Activated B cell treated with CpG ODN at 0.5 μM for 24 hours (primary cell): ENCODE measurements at regions of chr6 and their contacts with region 1.

Region 1: DNA sequence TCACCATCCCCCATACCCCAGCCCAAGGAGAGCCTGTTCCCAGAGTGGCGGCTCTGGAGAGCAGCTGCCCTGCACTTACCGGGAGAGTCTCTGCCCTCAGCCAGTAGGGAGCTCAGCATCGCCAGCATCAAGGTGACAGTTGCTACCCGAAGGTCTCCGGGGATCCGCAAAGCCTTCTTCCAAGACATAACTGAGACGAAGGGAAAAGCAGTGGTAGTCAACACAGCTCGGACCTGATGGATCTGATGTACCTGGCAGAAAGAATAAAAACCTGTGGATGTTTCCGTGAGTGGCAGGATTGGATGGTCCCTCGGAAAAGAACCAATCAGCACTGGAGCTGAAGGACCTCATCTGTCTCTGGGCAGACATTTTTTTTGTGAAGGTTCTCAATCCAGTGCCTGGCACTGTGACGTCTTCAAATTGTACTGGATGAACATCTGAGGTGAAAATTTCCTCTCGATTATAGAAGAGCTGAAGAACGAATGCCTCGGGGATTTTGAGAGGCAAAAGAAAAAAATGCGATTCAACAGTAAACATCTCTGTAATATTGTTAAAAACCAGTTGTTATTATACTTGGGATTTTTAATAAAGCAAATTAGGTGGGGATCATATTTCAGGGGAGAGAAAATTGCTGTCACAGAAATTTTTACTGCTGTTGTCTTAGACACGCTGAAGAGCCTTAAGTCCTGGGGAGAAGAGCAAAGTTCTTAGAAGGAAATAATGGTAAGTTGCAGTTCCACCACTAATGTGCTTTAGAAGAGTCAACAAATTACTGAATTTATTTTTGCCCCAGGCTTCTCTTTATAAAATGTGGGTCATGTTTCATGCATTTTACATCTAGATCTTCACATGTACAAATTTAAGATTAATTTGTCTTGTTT is at the start of gene HLA-DQB1:
- DNase-seq: no peak
- ATAC-seq: peak; percentile 65
- H3K4me3 Mint-ChIP-seq: peak within 1 kb of the TSS; percentile 90
- H3K27ac Mint-ChIP-seq: peak within 1 kb of the TSS; percentile 94
- H3K4me1 Mint-ChIP-seq: peaks cover 65% of the 10 kb centered on the region
- H3K27me3 Mint-ChIP-seq: no peaks in the 10 kb centered on the region
- CTCF ChIP-seq: no peak
- total RNA-seq, gene HLA-DQB1: 262 and 310 TPM in 2 replicates

Region 2: DNA sequence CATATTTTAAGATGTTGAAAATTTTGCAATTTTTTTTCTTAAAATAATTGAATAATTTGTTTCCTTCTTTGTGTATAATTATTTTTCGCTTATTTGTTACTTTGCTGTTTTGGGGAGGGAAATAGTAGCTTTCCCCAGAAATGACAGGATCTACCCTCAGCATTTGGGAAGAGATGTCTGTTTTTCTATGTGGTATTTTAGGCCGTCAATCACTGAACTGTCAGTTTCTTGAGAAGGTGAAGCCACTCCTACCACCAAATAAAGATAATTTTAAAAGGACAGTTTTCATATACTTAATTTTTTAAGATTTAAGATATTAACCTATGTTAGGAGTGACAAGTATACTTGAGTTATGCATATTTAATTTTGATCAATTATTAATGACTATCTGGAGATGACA is 326.4 kb before region 1 on chr6:
- CTCF ChIA-PET with region 1: no interaction called
- POLR2A ChIA-PET with region 1: no interaction called
- intact Hi-C with region 1: no loop called
- DNase-seq: no peak
- ATAC-seq: no peak
- H3K4me3 Mint-ChIP-seq: no peak overlapping the region
- H3K27ac Mint-ChIP-seq: no peak overlapping the region
- H3K4me1 Mint-ChIP-seq: peaks cover 46% of the 10 kb centered on the region
- H3K27me3 Mint-ChIP-seq: no peaks in the 10 kb centered on the region
- CTCF ChIP-seq: no peak

Region 3: GRCh38 chr6:32529697-32530429 is 136.8 kb before region 1 on chr6 and contains the start of gene HLA-DRB5:
- CTCF ChIA-PET with region 1: no interaction called
- POLR2A ChIA-PET with region 1: interaction called, 7 read pairs
- intact Hi-C with region 1: loop called (anchors 10 kb)
- DNase-seq: peak; percentile 20
- ATAC-seq: peak; percentile 76
- H3K4me3 Mint-ChIP-seq: peak within 1 kb of the TSS; percentile 92
- H3K27ac Mint-ChIP-seq: peak within 1 kb of the TSS; percentile 99
- H3K4me1 Mint-ChIP-seq: peaks cover 28% of the 10 kb centered on the region
- H3K27me3 Mint-ChIP-seq: no peaks in the 10 kb centered on the region
- CTCF ChIP-seq: no peak
- total RNA-seq, gene HLA-DRB5: 196 and 199 TPM in 2 replicates

Region 4: GRCh38 chr6:32685603-32686002 is 18.9 kb after region 1 on chr6:
- CTCF ChIA-PET with region 1: interaction called, 15 read pairs
- POLR2A ChIA-PET with region 1: interaction called, 387 read pairs
- intact Hi-C with region 1: loop called (anchors 1 kb)
- DNase-seq: no peak
- ATAC-seq: peak; percentile 70
- H3K4me3 Mint-ChIP-seq: peak overlapping the region; percentile 58
- H3K27ac Mint-ChIP-seq: peak overlapping the region; percentile 93
- H3K4me1 Mint-ChIP-seq: peaks cover 84% of the 10 kb centered on the region
- H3K27me3 Mint-ChIP-seq: no peaks in the 10 kb centered on the region
- CTCF ChIP-seq: no peak

Region 5: GRCh38 chr6:32700391-32701040 is 33.9 kb after region 1 on chr6:
- CTCF ChIA-PET with region 1: interaction called, 9 read pairs
- POLR2A ChIA-PET with region 1: interaction called, 7 read pairs
- intact Hi-C with region 1: loop called (anchors 2 kb)
- DNase-seq: no peak
- ATAC-seq: peak; percentile 80
- H3K4me3 Mint-ChIP-seq: peak overlapping the region; percentile 86
- H3K27ac Mint-ChIP-seq: peak overlapping the region; percentile 91
- H3K4me1 Mint-ChIP-seq: peaks cover 32% of the 10 kb centered on the region
- H3K27me3 Mint-ChIP-seq: no peaks in the 10 kb centered on the region
- CTCF ChIP-seq: peak; percentile 32

Region 6: DNA sequence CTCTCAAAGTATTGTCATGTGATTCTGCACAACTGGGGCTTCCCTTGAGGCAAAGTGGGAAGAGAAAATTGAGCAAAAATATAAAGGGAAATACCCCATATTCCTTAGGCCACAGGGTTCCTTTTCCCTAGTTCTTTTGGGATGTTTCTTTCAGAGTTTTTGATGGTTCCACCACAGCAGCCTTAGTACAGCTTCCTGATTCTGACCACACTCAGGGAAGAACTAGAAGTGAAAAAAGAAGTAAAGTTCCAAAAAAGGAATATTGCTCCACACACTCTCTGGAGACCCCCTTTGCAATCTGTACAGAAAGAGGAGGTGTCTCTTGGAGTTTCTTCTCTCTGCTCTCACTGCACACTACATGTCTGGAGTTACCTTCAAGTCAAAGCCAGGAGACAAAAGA is 46.6 kb after region 1 on chr6:
- CTCF ChIA-PET with region 1: no interaction called
- POLR2A ChIA-PET with region 1: no interaction called
- intact Hi-C with region 1: no loop called
- DNase-seq: no peak
- ATAC-seq: no peak
- H3K4me3 Mint-ChIP-seq: no peak overlapping the region
- H3K27ac Mint-ChIP-seq: no peak overlapping the region
- H3K4me1 Mint-ChIP-seq: no peaks in the 10 kb centered on the region
- H3K27me3 Mint-ChIP-seq: no peaks in the 10 kb centered on the region
- CTCF ChIP-seq: no peak

Region 7: DNA sequence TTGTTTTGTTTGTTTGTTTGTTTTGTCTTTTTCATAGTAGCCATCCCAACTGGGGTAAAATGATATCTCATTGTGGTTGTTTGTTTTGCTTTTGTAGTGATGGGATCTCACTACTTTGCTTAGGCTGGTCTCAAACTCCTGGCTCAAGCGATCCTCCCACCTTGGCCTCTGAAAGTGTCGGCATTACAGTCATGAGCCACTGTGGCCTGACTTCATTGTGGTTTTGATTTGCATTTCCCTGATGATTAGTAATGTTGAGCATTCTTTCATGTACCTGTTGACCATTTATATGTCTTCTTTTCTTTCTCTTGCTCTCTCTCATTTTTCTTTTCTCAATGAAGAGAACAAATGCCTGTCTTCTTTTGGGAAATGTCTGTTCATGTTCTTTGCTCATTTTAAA is 373.5 kb after region 1 on chr6:
- CTCF ChIA-PET with region 1: no interaction called
- POLR2A ChIA-PET with region 1: no interaction called
- intact Hi-C with region 1: no loop called
- DNase-seq: no peak
- ATAC-seq: no peak
- H3K4me3 Mint-ChIP-seq: no peak overlapping the region
- H3K27ac Mint-ChIP-seq: peak overlapping the region; percentile 53
- H3K4me1 Mint-ChIP-seq: peaks cover 10% of the 10 kb centered on the region
- H3K27me3 Mint-ChIP-seq: no peaks in the 10 kb centered on the region
- CTCF ChIP-seq: no peak